PC-3 (cell line): ENCODE measurements at regions of chr17 and their contacts with region 1.

Region 1: DNA sequence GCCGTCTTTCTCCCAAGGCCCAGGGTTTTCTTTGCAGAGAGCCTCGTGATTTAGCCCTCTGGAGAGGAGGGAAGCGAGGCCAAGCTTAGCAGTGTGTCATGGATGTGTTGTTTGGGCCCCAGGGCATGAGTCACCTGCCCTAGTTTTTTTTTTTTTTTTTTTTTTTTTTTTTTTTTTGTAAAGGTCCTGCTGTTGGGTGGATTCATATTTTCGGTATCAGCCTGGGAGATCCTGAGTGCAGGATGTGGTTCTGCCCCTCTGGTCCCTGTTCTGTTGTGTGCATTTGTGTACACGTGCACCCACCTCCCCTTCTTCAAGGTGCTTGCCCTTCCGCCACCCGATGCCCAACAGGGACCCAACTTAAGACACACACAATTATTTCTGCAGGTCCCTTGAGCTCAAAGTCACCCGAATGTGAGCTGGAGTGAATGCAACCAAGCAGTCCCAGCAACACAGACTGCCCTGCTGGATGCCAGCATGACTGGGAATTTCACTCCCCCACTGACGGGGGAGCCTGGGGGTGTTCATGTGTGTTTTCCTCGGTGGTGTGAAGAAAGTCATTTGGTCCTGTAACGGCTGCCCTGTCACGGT is 265.8 kb upstream of the TNRC6C start:
- DNase-seq: peak; percentile 67
- ATAC-seq: peak; percentile 67
- H3K4me3 ChIP-seq: no peak overlapping the region
- H3K27ac ChIP-seq: no peak overlapping the region
- H3K4me1 ChIP-seq: no peaks in the 10 kb centered on the region
- H3K27me3 ChIP-seq: peaks cover 82% of the 10 kb centered on the region
- CTCF ChIP-seq: no peak

Region 2: DNA sequence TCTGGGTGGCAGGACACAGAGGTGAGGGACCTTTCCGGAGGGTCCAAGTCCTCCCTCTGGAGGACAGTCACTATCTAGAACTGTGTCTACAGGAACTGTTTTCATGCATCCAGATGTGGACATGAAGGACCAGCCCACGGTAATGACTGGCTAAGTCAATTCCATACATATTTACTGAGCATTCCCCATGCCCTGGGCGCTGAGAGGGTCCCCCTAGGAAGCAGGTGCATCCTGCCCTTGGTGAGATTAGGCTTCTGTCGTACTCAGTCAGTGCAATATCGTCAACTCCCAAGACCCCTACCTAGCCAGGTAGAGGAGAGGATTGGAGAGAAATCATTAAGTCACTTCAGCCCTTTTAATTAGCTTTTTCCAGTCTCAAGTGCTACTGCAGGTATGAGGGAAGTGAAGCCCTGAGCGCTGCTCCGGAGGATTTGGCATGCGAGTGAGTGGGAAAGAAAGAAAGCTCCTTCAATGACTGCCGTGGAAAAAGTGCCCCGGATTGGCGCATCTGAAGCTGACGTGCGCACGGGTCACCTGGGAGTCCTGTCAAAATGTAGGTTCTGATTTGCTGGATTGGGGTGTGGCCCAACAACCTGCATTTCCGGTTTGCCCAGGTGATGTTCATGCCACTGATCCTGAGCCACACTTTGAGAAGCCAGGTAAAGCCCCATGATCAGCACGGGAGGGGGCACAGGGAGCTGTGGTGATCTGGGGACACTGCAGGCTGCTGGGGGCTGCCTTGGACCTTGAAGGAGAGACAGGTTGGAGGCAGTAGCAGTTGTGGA is 101.5 kb before region 1 on chr17:
- CTCF ChIA-PET with region 1: no interaction called
- POLR2A ChIA-PET with region 1: no interaction called
- intact Hi-C with region 1: no loop called
- DNase-seq: peak; percentile 17
- ATAC-seq: no peak
- H3K4me3 ChIP-seq: no peak overlapping the region
- H3K27ac ChIP-seq: no peak overlapping the region
- H3K4me1 ChIP-seq: 0 out of 2 replicates have a peak, but pooled peaks cover 1% of the 10 kb centered on the region
- H3K27me3 ChIP-seq: peaks cover 68% of the 10 kb centered on the region
- CTCF ChIP-seq: no peak

Region 3: DNA sequence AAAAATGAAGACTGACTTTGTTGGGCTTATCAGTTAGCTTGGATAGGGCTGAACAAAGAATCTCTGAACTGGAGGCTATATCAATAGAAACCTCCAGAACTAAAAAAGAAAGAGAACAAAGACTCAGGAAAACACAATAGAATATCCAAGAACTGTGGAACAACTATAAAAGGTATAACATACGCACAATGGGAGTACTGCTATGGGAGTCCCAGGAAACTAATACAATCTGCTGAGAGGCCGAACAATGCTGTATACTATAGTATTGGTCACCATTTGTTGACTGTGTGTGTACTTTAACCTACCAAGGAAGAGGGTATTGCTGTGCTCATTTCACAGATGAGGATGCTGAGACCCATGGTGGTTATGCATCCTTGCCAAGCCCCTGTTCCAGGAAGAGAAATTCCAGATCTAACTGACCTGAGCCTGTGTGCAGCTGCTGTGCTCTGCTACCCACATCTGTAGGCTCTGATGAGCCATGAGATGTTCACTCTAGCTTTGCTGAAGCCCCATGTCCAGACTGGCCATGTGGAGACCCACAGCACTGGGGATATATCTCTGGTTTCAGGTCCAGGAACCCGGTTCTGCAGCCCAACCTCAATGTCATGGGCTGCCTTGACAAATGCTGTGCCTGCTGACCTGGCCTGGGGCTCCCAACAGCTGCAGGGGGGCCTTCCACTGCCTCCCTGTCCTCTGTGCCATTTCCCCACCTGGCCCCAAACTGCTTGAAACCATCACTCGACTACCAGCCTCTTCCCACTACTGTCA is 11.6 kb after region 1 on chr17:
- CTCF ChIA-PET with region 1: no interaction called
- POLR2A ChIA-PET with region 1: no interaction called
- intact Hi-C with region 1: no loop called
- DNase-seq: no peak
- ATAC-seq: no peak
- H3K4me3 ChIP-seq: no peak overlapping the region
- H3K27ac ChIP-seq: no peak overlapping the region
- H3K4me1 ChIP-seq: no peaks in the 10 kb centered on the region
- H3K27me3 ChIP-seq: peaks cover 58% of the 10 kb centered on the region
- CTCF ChIP-seq: no peak

Region 4: GRCh38 chr17:77756846-77757560 is 64.3 kb after region 1 on chr17:
- CTCF ChIA-PET with region 1: interaction called, 13 read pairs
- POLR2A ChIA-PET with region 1: no interaction called
- intact Hi-C with region 1: no loop called
- DNase-seq: no peak
- ATAC-seq: no peak
- H3K4me3 ChIP-seq: no peak overlapping the region
- H3K27ac ChIP-seq: no peak overlapping the region
- H3K4me1 ChIP-seq: no peaks in the 10 kb centered on the region
- H3K27me3 ChIP-seq: peaks cover 70% of the 10 kb centered on the region
- CTCF ChIP-seq: no peak